Esophagus squamous epithelium (tissue), 5 donors: ENCODE measurements at regions of chr12 and their contacts with region 1.

Region 1: DNA sequence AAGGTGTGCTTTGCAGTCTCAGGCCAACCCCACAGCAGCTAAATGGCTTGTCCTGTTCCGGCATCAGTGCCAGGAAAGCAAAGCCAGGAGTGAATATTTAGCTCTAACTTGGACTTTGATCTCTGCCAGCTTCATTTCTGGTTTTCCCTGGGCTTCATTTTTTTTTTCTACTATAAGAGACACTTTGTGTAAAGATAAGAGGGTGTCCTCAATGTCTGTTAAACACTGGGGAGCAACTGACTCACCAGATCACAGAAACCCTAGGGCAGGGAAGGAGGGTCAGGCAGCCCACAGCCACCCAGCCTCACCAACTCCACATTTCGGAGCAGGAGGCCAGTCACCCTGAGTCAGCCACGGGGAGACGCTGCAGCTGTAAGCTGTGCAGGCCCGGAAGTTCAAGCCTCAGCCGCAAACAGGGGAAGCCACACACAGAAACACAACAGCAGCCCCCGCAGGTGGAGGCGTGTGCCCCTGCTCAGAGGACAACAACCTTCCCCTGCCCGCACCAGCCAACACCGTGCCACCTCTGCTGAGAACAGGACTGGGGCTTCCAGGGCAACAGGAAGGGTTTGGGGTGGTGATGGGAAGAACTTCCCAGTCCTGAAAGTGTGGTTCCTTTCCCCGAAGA is 6.3 kb downstream of the TNFRSF1A start:
- DNase-seq: no peak
- H3K4me3 ChIP-seq: peak overlapping the region; percentile 17 to 96 (median 81)
- H3K27ac ChIP-seq: peak overlapping the region; percentile 95 to 100 (median 96)
- H3K4me1 ChIP-seq: peaks cover 81 to 97% (median 82%) of the 10 kb centered on the region in 3 donors
- H3K27me3 ChIP-seq: no peaks in the 10 kb centered on the region
- CTCF ChIP-seq: peak; percentile 24 to 63 (median 56)
- POLR2A ChIP-seq: peak in 1 of 4 donors; percentile 49

Region 2: GRCh38 chr12:6074979-6075585 is 260.5 kb before region 1 on chr12:
- intact Hi-C with region 1: no loop called
- DNase-seq: no peak
- H3K4me3 ChIP-seq: peak overlapping the region in 2 of 4 donors; percentile 20 to 49
- H3K27ac ChIP-seq: peak overlapping the region in 3 of 4 donors; percentile 34 to 48 (median 42)
- H3K4me1 ChIP-seq: peaks cover 40 to 83% (median 53%) of the 10 kb centered on the region in 3 donors
- H3K27me3 ChIP-seq: no peaks in the 10 kb centered on the region
- CTCF ChIP-seq: no peak
- POLR2A ChIP-seq: no peak

Region 3: GRCh38 chr12:6135071-6135470 is 200.5 kb before region 1 on chr12:
- intact Hi-C with region 1: no loop called
- DNase-seq: no peak
- H3K4me3 ChIP-seq: no peak overlapping the region
- H3K27ac ChIP-seq: no peak overlapping the region
- H3K4me1 ChIP-seq: peaks cover 0 to 6% (median 3%) of the 10 kb centered on the region in 3 donors
- H3K27me3 ChIP-seq: no peaks in the 10 kb centered on the region
- CTCF ChIP-seq: no peak
- POLR2A ChIP-seq: no peak

Region 4: GRCh38 chr12:6376079-6376869 is 40.7 kb after region 1 on chr12:
- intact Hi-C with region 1: loop called (anchors 5 kb)
- DNase-seq: no peak
- H3K4me3 ChIP-seq: peak overlapping the region; percentile 36 to 64 (median 45)
- H3K27ac ChIP-seq: peak overlapping the region; percentile 91 to 95 (median 93)
- H3K4me1 ChIP-seq: peaks cover 51 to 97% (median 65%) of the 10 kb centered on the region in 3 donors
- H3K27me3 ChIP-seq: no peaks in the 10 kb centered on the region
- CTCF ChIP-seq: peak in 5 of 6 experiments; percentile 8 to 54 (median 37)
- POLR2A ChIP-seq: peak in 2 of 4 donors; percentile 9 to 15

Region 5: GRCh38 chr12:6416596-6416995 is 81.0 kb after region 1 on chr12:
- intact Hi-C with region 1: no loop called
- DNase-seq: no peak
- H3K4me3 ChIP-seq: no peak overlapping the region
- H3K27ac ChIP-seq: no peak overlapping the region
- H3K4me1 ChIP-seq: peaks cover 0 to 20% (median 5%) of the 10 kb centered on the region in 3 donors
- H3K27me3 ChIP-seq: no peaks in the 10 kb centered on the region
- CTCF ChIP-seq: no peak
- POLR2A ChIP-seq: no peak

Region 6: GRCh38 chr12:6507102-6507998 is 171.8 kb after region 1 on chr12:
- intact Hi-C with region 1: no loop called
- DNase-seq: no peak
- H3K4me3 ChIP-seq: no peak overlapping the region
- H3K27ac ChIP-seq: peak overlapping the region; percentile 33 to 67 (median 35)
- H3K4me1 ChIP-seq: peaks cover 0 to 15% (median 5%) of the 10 kb centered on the region in 3 donors
- H3K27me3 ChIP-seq: no peaks in the 10 kb centered on the region
- CTCF ChIP-seq: no peak
- POLR2A ChIP-seq: no peak